Heart right ventricle (tissue), 16 donors: ENCODE measurements at regions of chr21 and their contacts with region 1.

Region 1: DNA sequence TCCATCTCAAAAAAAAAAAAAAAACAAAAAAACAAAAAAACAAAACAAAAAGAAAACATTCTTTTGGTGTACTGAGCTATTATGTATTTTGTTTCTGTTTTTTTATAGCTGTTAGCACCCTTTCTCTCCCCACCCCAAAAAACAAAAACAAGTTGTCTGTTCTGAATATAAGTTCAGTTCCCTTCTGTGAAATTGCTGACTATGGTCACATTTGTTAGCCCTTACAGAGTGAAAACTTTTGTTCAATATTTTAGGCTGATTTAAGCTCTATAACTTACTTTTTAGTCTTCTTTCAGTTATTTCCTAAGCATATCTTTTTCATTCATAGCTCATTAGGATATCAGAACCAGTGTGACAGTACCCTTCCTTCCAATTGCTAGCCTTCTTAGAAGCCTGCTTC is 1056.6 kb upstream of the NCAM2 start:
- DNase-seq: no peak
- ATAC-seq: no peak
- H3K4me3 ChIP-seq: no peak overlapping the region
- H3K27ac ChIP-seq: no peak overlapping the region
- H3K4me1 ChIP-seq: no peaks in the 10 kb centered on the region
- H3K27me3 ChIP-seq: no peaks in the 10 kb centered on the region
- CTCF ChIP-seq: no peak

Region 2: GRCh38 chr21:19987671-19988070 is 46.0 kb after region 1 on chr21:
- intact Hi-C with region 1: loop called in 1 of 10 experiments (anchors 2 kb)
- DNase-seq: no peak
- ATAC-seq: no peak
- H3K4me3 ChIP-seq: no peak overlapping the region
- H3K27ac ChIP-seq: no peak overlapping the region
- H3K4me1 ChIP-seq: no peaks in the 10 kb centered on the region
- H3K27me3 ChIP-seq: no peaks in the 10 kb centered on the region
- CTCF ChIP-seq: no peak